MCF 10A (cell line): ENCODE measurements at regions of chr4 and their contacts with region 1.

Region 1: DNA sequence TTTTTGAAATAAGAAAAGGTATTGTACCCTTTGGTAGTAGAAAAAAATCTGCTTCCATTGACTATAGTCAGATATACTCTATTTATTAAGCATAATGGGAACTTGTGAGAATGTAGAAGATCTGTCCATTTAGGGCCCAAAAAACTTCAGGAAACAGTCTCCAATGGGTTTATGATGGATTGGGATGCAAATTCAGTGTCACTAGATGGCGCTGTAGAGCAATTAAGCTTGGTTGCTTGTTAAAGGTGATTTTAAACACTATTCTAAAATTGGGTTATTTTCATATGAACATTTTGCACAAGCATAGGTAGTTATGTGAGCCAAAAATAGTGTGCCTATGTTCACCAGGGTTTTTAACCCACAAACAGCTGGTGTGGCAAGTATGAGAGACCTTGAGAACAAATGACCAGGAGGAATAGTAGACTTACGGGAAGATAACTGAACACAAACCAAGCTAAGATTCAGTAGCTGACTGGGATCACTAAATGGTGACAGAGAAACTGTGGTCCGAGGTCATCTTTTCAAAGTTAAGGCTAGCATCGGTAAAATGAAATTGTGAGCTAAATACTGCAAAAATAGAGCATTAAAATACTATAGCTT is 80.3 kb upstream of the LSM6 start:
- DNase-seq: peak; percentile 79
- H3K4me3 Mint-ChIP-seq: no peak overlapping the region
- H3K27ac Mint-ChIP-seq: no peak overlapping the region
- H3K4me1 Mint-ChIP-seq: no peaks in the 10 kb centered on the region
- H3K27me3 Mint-ChIP-seq: no peaks in the 10 kb centered on the region
- CTCF ChIP-seq: peak; percentile 72

Region 2: GRCh38 chr4:146076081-146076480 is 19.1 kb before region 1 on chr4:
- CTCF ChIA-PET with region 1: interaction called, 32 read pairs
- POLR2A ChIA-PET with region 1: no interaction called
- intact Hi-C with region 1: no loop called
- DNase-seq: no peak
- H3K4me3 Mint-ChIP-seq: no peak overlapping the region
- H3K27ac Mint-ChIP-seq: no peak overlapping the region
- H3K4me1 Mint-ChIP-seq: no peaks in the 10 kb centered on the region
- H3K27me3 Mint-ChIP-seq: no peaks in the 10 kb centered on the region
- CTCF ChIP-seq: no peak

Region 3: DNA sequence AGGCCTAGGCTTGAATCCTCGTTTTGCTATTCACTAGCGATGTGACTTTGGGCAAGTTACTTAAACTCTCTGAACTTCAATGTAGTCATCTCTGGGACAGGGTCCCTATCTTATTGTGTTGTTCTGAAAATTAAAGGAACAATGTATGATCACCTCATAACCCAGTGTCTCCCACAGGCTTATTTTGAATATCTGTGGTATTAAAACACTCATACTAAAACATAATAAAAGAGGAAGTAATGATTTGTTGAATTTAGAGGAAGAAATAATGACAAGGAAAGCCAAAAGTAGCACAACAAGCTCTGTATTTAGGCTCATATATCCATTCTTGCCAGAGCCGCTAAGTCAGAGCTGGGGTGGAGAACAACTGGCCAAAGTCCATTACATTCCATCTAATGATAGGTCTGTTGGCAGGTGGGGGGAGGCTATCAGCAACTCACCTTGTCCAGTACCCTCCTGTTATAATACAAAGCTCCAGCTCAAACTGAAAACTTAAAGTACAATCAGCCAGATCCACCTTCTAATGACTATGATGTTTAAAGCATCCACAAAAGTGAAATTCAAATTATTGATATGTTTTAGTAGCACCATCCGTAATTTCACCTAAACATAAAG is 15.8 kb after region 1 on chr4:
- CTCF ChIA-PET with region 1: interaction called, 10 read pairs
- POLR2A ChIA-PET with region 1: interaction called, 3 read pairs
- intact Hi-C with region 1: no loop called
- DNase-seq: no peak
- H3K4me3 Mint-ChIP-seq: no peak overlapping the region
- H3K27ac Mint-ChIP-seq: no peak overlapping the region
- H3K4me1 Mint-ChIP-seq: no peaks in the 10 kb centered on the region
- H3K27me3 Mint-ChIP-seq: peaks cover 11% of the 10 kb centered on the region
- CTCF ChIP-seq: no peak

Region 4: GRCh38 chr4:146175541-146176453 is 80.6 kb after region 1 on chr4 and contains the start of gene LSM6:
- CTCF ChIA-PET with region 1: interaction called, 9 read pairs
- POLR2A ChIA-PET with region 1: interaction called, 5 read pairs
- intact Hi-C with region 1: loop called (anchors 1 kb)
- DNase-seq: peak; percentile 87
- H3K4me3 Mint-ChIP-seq: peak within 1 kb of the TSS; percentile 83
- H3K27ac Mint-ChIP-seq: peak within 1 kb of the TSS; percentile 72
- H3K4me1 Mint-ChIP-seq: peaks cover 18% of the 10 kb centered on the region
- H3K27me3 Mint-ChIP-seq: no peaks in the 10 kb centered on the region
- CTCF ChIP-seq: no peak
- total RNA-seq, gene LSM6: 40.0 and 41.4 TPM in 2 replicates

Region 5: GRCh38 chr4:146342600-146343192 is 247.5 kb after region 1 on chr4:
- CTCF ChIA-PET with region 1: interaction called, 6 read pairs
- POLR2A ChIA-PET with region 1: no interaction called
- intact Hi-C with region 1: loop called (anchors 5 kb)
- DNase-seq: peak; percentile 50
- H3K4me3 Mint-ChIP-seq: no peak overlapping the region
- H3K27ac Mint-ChIP-seq: no peak overlapping the region
- H3K4me1 Mint-ChIP-seq: no peaks in the 10 kb centered on the region
- H3K27me3 Mint-ChIP-seq: no peaks in the 10 kb centered on the region
- CTCF ChIP-seq: peak; percentile 61

Region 6: DNA sequence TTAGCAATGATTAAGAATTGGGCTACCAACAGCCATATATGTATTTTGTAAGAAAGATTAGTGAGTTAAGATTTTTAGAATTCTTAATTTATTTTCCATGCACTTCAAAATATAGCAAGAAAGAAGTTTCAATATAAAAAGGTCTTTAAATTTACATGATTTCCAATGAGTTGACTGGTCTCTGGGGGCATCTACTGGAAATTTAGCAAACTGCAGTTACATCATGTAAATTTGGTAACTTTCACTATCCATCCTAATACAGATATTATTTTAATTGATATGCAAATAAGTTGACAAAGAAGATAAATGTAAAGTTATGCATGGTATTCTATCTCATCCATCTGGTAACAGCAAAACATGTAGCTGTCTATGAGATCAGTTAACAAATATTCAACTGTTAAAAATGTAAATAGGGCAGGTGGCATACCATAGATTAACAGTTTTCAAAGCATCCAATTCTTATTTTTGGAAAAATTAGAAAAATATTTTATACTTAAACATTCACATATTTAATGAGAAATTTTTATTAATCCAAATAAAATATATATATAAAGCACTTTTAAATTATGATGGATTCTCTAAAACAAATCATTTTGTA is 821.4 kb after region 1 on chr4:
- CTCF ChIA-PET with region 1: no interaction called
- POLR2A ChIA-PET with region 1: no interaction called
- intact Hi-C with region 1: loop called (anchors 1 kb)
- DNase-seq: peak; percentile 59
- H3K4me3 Mint-ChIP-seq: no peak overlapping the region
- H3K27ac Mint-ChIP-seq: no peak overlapping the region
- H3K4me1 Mint-ChIP-seq: peaks cover 6% of the 10 kb centered on the region
- H3K27me3 Mint-ChIP-seq: peaks cover 58% of the 10 kb centered on the region
- CTCF ChIP-seq: peak; percentile 89